Naive thymus-derived CD8-positive, alpha-beta T cell (primary cell): ENCODE measurements at regions of chr22 and their contacts with region 1.

Region 1: DNA sequence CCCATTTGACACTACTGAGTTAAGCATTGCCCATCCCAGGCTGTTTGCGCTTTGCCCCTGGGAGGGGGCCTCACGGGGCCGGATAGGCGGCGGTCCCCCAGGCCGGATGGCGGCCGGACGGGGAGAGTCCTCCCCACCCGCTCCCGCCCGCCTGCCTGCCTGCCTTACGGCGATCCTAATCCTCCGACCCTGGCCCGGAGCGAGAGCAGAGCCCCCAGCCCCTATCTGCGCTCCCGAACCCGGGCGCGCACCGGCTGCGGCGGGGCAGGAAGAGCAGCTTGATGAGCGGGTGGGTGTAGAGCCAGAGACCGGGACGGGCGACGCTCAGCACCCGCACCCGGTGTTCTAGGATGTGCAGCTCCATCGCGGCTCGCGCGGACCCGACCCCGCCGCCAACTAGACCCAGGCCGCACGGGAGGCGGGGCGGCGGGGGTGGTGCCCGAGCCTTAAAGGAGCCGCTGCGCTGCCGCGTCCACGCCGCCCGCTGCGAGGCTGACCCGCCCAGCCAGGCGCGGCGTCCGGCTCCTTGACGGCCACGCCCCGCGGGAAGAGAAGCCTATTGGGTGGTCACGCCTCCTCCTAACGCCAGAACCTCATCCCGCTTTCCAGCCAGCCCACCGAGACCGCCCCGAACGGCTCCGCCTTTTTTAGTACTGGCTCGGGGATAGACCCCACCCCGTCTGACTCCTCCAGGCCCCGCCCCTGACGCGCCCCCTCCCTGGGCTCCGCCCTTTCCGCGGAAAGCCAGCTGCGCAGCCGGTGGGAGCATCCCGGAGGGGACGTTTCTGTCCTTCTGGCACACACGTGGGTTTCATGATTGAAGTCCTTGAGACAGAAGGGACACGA is at the start of gene CASTOR1:
- DNase-seq: peak; percentile 77 to 93 (median 86)
- ATAC-seq: peak; percentile 76 to 77
- H3K4me3 Mint-ChIP-seq: peak within 1 kb of the TSS; percentile 87 to 95 (median 92)
- H3K27ac Mint-ChIP-seq: peak within 1 kb of the TSS; percentile 89 to 97 (median 95)
- H3K4me1 Mint-ChIP-seq: peaks cover 13 to 60% (median 49%) of the 10 kb centered on the region in 4 donors
- H3K27me3 Mint-ChIP-seq: no peaks in the 10 kb centered on the region
- polyA plus RNA-seq, gene CASTOR1: 16.9 to 33.5 (median 20.8) TPM

Region 2: DNA sequence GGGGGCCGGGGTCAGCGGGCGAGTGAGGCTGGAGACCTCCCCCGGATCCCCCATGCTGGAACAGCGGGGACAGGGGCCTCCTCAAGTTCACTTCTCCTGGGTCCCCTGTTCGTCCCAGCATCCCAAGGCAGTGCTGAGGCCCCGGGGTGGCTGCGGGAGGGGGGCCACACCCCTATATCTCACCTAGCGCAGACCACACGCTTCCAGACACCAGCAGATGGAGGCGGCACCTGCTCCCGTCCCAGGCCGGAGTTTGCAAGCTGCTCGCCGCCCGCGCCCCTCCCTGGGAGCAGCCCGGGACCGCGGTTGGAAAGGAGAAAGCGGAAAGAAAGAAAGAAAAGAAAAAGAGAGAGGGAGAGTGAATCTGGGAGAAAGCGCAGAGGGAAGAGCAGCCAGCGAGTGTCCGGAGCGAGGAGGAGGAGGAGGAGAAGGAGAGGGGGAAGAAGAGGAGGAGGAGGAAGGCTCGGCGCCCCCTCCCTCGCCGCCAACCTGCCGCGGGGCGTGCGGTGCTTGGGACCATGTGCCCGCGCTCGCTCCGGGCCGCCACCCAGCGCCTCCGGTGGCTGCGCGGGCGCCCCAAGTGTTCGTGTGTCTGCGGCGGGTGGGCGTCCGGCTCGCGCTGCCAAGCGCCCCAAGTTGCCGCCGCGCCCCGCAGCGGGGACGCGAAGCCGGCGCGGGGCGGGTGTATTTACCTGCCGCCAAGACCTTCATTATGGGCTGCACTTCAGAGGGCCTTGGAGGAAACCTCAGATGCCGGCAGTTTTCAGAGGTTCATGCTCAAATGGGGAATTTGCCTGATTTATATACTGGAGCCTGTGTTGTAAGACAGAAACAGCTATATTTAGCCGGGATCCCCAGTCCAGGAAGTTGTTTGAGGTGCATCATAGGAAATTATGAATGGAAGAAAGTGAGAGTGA is 43.1 kb before region 1 on chr22 and contains the start of gene LIF:
- POLR2A ChIA-PET with region 1: no interaction called
- DNase-seq: peak in 8 of 10 donors; percentile 31 to 57 (median 48)
- ATAC-seq: peak; percentile 92 to 97
- H3K4me3 Mint-ChIP-seq: peak within 1 kb of the TSS; percentile 81 to 90 (median 83)
- H3K27ac Mint-ChIP-seq: peak within 1 kb of the TSS in 2 of 10 donors; percentile 69 to 73
- H3K4me1 Mint-ChIP-seq: peaks cover 23 to 38% (median 29%) of the 10 kb centered on the region in 4 donors
- H3K27me3 Mint-ChIP-seq: peaks cover 2 to 34% (median 13%) of the 10 kb centered on the region in 5 donors
- polyA plus RNA-seq, gene LIF: not detected

Region 3: DNA sequence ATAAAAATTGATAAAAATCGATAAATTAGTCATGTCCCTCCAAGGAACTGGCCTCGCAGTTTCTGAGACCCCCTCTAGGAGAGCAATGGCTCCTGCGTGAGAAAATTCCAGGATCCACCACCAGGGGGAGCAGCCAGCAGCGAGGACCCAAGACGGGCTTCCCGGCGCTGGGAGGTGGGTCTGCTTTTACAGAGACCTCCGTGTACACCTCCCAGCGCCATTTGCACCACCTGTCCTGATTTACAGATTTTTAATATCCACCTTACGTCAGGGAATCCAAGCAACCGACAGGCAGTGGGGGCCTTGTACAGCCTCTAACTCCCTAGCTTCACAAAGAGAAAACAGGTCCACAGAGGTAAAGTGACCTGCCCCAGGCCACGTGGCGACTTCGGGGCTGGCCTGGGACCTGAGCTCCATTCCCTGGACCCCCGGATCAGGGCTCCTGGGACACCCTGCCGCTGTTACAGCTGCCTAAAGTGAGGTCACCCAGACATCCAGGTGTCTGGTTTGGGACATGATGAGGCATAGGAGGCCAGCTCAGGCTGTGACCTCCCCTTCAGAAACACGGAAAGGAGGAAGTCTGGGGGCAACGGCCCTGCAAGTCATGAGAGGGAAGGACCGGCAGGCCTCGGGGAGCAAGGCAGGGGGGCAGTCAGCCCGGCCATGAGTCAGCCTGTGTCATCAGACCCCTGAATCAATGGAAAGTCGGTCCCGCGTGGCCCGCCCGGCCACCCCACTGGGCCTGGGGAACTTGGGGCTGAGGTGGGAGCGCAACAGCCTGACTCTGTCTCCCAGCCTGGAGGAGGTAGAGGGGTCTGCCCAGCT is 26.2 kb before region 1 on chr22:
- POLR2A ChIA-PET with region 1: interaction called, 51 read pairs
- DNase-seq: peak; percentile 66 to 87 (median 76)
- ATAC-seq: peak in 1 of 2 donors; percentile 12
- H3K4me3 Mint-ChIP-seq: peak overlapping the region in 9 of 10 donors; percentile 42 to 74 (median 57)
- H3K27ac Mint-ChIP-seq: peak overlapping the region in 8 of 10 donors; percentile 43 to 92 (median 76)
- H3K4me1 Mint-ChIP-seq: peaks cover 26 to 51% (median 42%) of the 10 kb centered on the region in 4 donors
- H3K27me3 Mint-ChIP-seq: no peaks in the 10 kb centered on the region

Region 4: GRCh38 chr22:30310881-30311771 is 21.8 kb after region 1 on chr22:
- POLR2A ChIA-PET with region 1: interaction called, 416 read pairs
- DNase-seq: no peak
- ATAC-seq: no peak
- H3K4me3 Mint-ChIP-seq: peak overlapping the region; percentile 47 to 86 (median 76)
- H3K27ac Mint-ChIP-seq: peak overlapping the region; percentile 94 to 100 (median 98)
- H3K4me1 Mint-ChIP-seq: peaks cover 67 to 97% (median 96%) of the 10 kb centered on the region in 4 donors
- H3K27me3 Mint-ChIP-seq: no peaks in the 10 kb centered on the region

Region 5: GRCh38 chr22:30348809-30349208 is 59.5 kb after region 1 on chr22:
- POLR2A ChIA-PET with region 1: interaction called, 100 read pairs
- DNase-seq: no peak
- ATAC-seq: no peak
- H3K4me3 Mint-ChIP-seq: peak overlapping the region in 1 of 10 donors; percentile 11
- H3K27ac Mint-ChIP-seq: peak overlapping the region in 7 of 10 donors; percentile 22 to 83 (median 65)
- H3K4me1 Mint-ChIP-seq: peaks cover 21 to 66% (median 48%) of the 10 kb centered on the region in 4 donors
- H3K27me3 Mint-ChIP-seq: no peaks in the 10 kb centered on the region

Region 6: GRCh38 chr22:30386960-30387827 is 97.8 kb after region 1 on chr22 and contains the start of gene RNF215:
- POLR2A ChIA-PET with region 1: interaction called, 198 read pairs
- DNase-seq: peak; percentile 61 to 90 (median 81)
- ATAC-seq: peak; percentile 78
- H3K4me3 Mint-ChIP-seq: peak within 1 kb of the TSS; percentile 61 to 91 (median 80)
- H3K27ac Mint-ChIP-seq: peak within 1 kb of the TSS in 8 of 10 donors; percentile 55 to 93 (median 84)
- H3K4me1 Mint-ChIP-seq: peaks cover 14 to 27% (median 24%) of the 10 kb centered on the region in 4 donors
- H3K27me3 Mint-ChIP-seq: no peaks in the 10 kb centered on the region
- polyA plus RNA-seq, gene RNF215: 0.14 to 0.44 (median 0.39) TPM